Activated T-helper 1 cell treated with anti-CD3 and anti-CD28 coated beads, Interleukin-12 subunit alpha, Interleukin-12 subunit beta, Interleukin-2, Interleukin-4 antibody, amounts not matched to agents 30 ng/mL and 10 ng/mL and 1 ng/mL, durations not matched to agents 14 hours and 24 hours and 36 hours (primary cell): ENCODE measurements at regions of chr17 and their contacts with region 1.

Region 1: DNA sequence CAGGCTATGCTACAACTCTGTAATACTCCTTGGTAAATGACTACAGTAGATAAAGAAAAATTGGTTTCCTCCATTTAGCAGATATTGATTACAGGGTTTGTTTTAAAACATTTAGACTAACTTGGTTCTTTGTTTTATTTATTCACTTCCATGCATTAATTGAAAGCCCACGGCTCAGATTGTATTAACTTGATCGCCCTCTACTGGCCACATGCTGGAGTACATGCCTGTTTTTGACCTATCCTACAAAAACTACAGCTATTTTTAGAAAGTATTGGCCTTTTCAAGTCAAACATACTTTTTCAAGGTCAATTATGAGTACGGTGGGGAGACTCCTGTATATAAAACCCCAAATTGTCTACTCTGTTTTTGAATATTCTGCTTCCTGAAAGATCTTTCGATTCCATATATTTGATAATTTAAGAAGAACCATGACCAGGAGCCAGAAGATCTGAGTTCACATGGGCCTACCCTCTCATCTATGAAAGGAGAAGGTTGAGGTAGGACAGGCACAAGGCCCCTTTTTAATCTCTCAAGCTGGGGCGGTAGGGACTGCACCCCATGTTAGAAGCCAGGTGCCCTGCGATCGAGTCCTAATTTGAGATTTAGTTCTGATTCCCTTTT is 51.8 kb downstream of the CA10 start:
- DNase-seq: no peak
- H3K4me3 Mint-ChIP-seq: no peak overlapping the region
- H3K27ac Mint-ChIP-seq: no peak overlapping the region
- H3K4me1 Mint-ChIP-seq: no peaks in the 10 kb centered on the region
- H3K27me3 Mint-ChIP-seq: peaks cover 2% of the 10 kb centered on the region

Region 2: DNA sequence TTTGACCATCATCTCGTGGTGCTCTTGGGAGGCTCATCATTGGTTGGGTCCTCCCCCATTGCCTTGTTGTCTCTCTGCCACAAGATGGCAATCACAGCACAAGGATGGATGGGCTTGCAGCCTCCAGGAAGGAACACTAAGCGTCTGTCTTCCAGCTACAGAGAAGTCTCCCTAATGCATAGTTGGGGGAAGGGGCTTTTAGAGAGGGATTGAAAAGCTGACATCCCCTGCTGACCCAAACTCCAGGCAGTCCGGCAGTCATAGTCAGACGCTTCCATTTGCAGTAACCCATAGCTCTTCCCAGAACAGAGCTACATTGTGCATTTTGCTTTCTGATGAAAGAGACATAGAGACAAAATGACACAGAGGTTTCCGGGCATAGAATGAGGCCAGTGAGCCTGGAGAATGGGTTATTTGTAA is 735.0 kb before region 1 on chr17:
- intact Hi-C with region 1: loop called (anchors 5 kb)
- DNase-seq: peak; percentile 16
- H3K4me3 Mint-ChIP-seq: no peak overlapping the region
- H3K27ac Mint-ChIP-seq: no peak overlapping the region
- H3K4me1 Mint-ChIP-seq: peaks cover 8% of the 10 kb centered on the region
- H3K27me3 Mint-ChIP-seq: peaks cover 1% of the 10 kb centered on the region

Region 3: GRCh38 chr17:51764387-51764972 is 342.3 kb before region 1 on chr17:
- intact Hi-C with region 1: loop called (anchors 1 kb)
- DNase-seq: peak; percentile 29
- H3K4me3 Mint-ChIP-seq: no peak overlapping the region
- H3K27ac Mint-ChIP-seq: no peak overlapping the region
- H3K4me1 Mint-ChIP-seq: peaks cover 6% of the 10 kb centered on the region
- H3K27me3 Mint-ChIP-seq: peaks cover 12% of the 10 kb centered on the region

Region 4: GRCh38 chr17:51860954-51861561 is 245.7 kb before region 1 on chr17:
- intact Hi-C with region 1: loop called (anchors 2 kb)
- DNase-seq: no peak
- H3K4me3 Mint-ChIP-seq: no peak overlapping the region
- H3K27ac Mint-ChIP-seq: no peak overlapping the region
- H3K4me1 Mint-ChIP-seq: no peaks in the 10 kb centered on the region
- H3K27me3 Mint-ChIP-seq: no peaks in the 10 kb centered on the region

Region 5: DNA sequence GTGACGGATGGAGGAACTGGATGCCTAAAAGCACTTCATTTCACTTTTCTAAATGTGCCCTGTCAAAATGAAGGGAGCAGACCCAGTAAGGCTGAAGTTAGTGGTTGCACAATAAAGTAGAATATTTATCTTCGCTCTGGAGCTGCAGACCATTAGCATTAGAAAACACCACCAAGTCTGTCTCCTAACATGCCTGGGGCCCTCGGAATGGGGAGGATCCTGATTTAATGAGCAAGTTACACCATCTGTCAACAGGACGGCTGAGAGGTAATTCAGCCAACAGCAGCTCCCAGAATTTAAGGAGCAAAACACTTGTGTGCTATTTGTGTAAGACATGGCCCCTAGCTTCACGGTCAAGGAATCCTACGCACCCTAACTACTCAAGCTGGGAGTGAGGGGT is 29.4 kb after region 1 on chr17:
- intact Hi-C with region 1: no loop called
- DNase-seq: no peak
- H3K4me3 Mint-ChIP-seq: no peak overlapping the region
- H3K27ac Mint-ChIP-seq: no peak overlapping the region
- H3K4me1 Mint-ChIP-seq: no peaks in the 10 kb centered on the region
- H3K27me3 Mint-ChIP-seq: peaks cover 2% of the 10 kb centered on the region